OCI-LY7 (cell line): ENCODE measurements at regions of chr10 and their contacts with region 1.

Region 1: GRCh38 chr10:17607603-17608332 is 9.4 kb downstream of the HACD1 start:
- DNase-seq: peak; percentile 72
- H3K4me3 ChIP-seq: no peak overlapping the region
- H3K27ac ChIP-seq: no peak overlapping the region
- H3K4me1 ChIP-seq: no peaks in the 10 kb centered on the region
- CTCF ChIP-seq: peak; percentile 96

Region 2: GRCh38 chr10:17527516-17528146 is 80.1 kb before region 1 on chr10:
- CTCF ChIA-PET with region 1: no interaction called
- POLR2A ChIA-PET with region 1: no interaction called
- intact Hi-C with region 1: no loop called
- DNase-seq: no peak
- H3K4me3 ChIP-seq: no peak overlapping the region
- H3K27ac ChIP-seq: no peak overlapping the region
- H3K4me1 ChIP-seq: no peaks in the 10 kb centered on the region
- CTCF ChIP-seq: no peak

Region 3: DNA sequence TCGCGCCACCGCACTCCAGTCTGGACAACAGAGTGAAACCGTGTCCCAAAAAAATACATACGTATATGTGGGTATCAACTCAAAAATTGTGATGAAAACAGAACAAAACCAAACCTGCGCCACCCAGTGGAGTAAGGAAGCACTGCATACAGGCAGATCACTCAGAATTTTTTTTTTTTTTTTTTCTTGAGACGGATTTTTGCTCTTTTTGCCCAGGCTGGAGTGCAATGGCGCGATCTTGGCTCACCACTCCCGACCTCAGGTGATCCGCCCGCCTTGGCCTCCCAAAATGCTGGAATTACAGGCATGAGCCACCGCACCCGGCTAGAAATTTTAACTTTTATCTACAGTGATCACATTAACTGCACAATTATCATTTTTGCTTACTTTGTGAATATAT is 135.2 kb after region 1 on chr10:
- CTCF ChIA-PET with region 1: no interaction called
- POLR2A ChIA-PET with region 1: no interaction called
- intact Hi-C with region 1: loop called (anchors 2 kb)
- DNase-seq: peak; percentile 69
- H3K4me3 ChIP-seq: peak overlapping the region; percentile 43
- H3K27ac ChIP-seq: no peak overlapping the region
- H3K4me1 ChIP-seq: peaks cover 13% of the 10 kb centered on the region
- CTCF ChIP-seq: peak; percentile 85

Region 4: GRCh38 chr10:18104223-18104872 is 496.6 kb after region 1 on chr10:
- CTCF ChIA-PET with region 1: no interaction called
- POLR2A ChIA-PET with region 1: no interaction called
- intact Hi-C with region 1: loop called (anchors 5 kb)
- DNase-seq: peak; percentile 39
- H3K4me3 ChIP-seq: no peak overlapping the region
- H3K27ac ChIP-seq: no peak overlapping the region
- H3K4me1 ChIP-seq: no peaks in the 10 kb centered on the region
- CTCF ChIP-seq: peak; percentile 91

Region 5: DNA sequence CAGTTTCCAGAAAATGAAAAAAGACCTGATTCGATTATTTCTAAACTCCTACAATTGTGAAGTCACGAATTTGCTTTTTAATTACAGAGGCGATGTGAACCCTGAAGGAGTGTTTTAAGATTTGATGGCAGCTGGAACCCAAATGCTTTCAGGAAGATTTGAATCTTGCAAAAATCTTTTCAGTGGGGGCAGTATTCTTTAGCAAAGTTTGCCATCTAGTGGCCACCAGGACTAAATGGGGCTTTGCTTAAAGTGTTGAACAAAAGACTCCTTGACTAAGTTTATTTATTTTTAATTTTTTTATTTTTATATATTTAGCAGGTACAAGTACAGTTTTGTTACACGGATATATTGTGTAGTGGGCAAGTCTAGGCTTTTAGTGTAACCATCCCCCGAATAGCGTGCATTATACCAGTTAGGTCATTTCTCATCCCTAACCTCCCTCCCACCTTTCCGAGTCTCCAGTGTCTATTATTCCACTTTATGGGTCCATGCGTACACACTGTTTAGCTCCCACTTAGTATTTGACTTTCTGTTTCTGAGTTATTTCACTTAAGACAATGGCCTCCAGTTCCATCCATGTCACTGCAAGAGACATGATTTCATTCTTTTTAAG is 631.2 kb after region 1 on chr10:
- CTCF ChIA-PET with region 1: no interaction called
- POLR2A ChIA-PET with region 1: no interaction called
- intact Hi-C with region 1: loop called (anchors 5 kb)
- DNase-seq: peak; percentile 33
- H3K4me3 ChIP-seq: no peak overlapping the region
- H3K27ac ChIP-seq: no peak overlapping the region
- H3K4me1 ChIP-seq: no peaks in the 10 kb centered on the region
- CTCF ChIP-seq: peak; percentile 80